Ascending aorta (tissue), 2 donors: ENCODE measurements at regions of chr13 and their contacts with region 1.

Region 1: DNA sequence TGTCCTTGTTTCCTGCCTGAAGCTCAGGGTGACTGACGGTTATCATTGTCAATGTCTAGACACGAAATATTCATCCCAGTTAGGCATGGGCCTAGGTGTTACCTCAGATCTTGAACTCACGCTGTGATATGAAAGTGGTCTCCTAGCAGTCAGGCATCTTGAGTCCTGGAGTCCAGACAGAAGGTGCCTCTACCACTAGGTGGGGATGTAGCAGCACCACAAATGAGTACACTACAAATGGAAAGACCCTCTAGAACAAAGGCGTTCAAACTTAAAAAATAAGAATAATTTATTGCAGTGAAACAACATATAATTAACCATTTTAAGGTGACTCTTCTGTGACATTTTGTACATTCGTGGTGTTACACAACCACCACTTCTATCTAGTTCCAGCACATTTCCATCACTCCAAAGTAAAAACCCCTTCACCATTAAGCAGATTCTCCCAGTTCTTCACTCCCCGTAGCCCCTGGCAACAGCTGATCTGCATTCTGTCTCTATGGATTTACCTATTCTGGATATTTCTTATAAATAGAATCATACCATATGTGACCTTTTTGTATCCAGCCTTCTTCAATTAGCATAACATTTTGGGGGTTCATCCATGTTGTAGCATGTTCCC is 11.9 kb upstream of the FRY start:
- DNase-seq: no peak
- H3K4me3 ChIP-seq: no peak overlapping the region
- H3K27ac ChIP-seq: no peak overlapping the region
- H3K4me1 ChIP-seq: no peaks in the 10 kb centered on the region
- H3K27me3 ChIP-seq: no peaks in the 10 kb centered on the region
- CTCF ChIP-seq: peak; percentile 58 to 80 (median 60)

Region 2: DNA sequence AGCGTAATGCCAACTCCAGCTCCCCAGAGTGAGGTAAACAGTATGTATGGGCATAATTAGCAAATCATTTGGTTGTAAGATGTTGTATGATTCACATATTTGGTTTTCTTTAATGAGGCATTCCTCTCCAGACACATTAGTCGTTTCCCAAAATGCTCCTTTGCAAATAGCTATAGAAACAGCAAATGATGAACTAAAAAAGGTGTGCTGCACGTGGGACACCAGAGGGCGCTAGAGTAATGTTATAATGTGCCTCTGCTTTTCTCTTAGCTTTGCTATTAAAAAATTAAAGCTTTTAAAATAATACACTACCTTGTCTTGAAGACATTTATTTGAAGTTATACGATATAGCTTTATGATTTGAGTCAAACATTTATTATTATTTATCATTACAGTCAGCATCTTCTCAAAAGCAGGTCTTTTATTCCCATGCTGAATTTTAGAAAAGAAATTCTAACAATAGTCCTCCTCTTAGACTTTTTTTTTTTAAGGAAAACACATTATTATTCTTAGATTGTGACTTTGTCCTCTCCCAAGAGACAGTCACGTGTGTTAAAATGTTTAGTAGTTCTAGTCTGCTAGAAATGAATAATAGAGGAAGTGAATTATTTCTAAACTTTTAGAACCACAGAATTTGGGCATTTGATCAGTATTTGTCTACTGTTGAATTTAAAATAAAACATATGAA is 109.7 kb before region 1 on chr13:
- intact Hi-C with region 1: loop called (anchors 5 kb)
- DNase-seq: no peak
- H3K4me3 ChIP-seq: no peak overlapping the region
- H3K27ac ChIP-seq: no peak overlapping the region
- H3K4me1 ChIP-seq: peaks cover 0 to 6% of the 10 kb centered on the region in 2 donors
- H3K27me3 ChIP-seq: no peaks in the 10 kb centered on the region
- CTCF ChIP-seq: peak; percentile 66 to 85 (median 81)

Region 3: DNA sequence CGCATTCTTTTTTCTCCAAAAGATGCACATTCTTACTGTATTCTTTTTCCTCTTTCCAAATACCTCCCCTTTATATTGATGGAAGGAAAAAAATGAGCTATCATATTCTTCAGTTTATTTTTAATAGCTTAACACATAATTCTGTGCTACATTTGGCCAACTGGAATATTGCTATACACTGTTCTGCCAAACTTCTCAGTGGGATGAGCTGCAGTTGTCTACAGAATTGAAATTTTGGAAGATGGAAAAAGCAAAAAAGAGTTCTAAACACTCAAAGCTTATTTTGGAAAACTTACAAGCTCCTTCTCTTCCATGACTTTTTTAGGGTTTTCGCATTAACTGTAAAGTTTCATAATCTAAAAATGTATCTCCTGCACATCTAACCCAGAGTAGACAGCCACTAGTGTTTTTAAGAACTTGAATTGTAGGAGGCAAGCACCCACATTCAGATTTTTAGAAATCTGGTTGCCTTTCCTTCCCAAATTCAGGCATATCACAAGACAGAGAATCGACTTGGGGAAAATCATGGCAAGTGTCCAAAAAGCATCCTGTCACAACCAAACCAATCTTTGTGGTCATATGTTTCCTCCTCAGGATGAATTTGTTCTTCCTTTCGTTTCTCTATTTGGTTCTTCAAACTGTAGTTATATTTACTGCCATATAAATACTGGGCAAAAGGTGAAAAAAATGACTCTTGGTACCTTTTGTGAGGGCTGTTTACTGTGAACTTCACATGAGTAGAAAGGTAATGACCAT is 99.6 kb before region 1 on chr13:
- intact Hi-C with region 1: no loop called
- DNase-seq: no peak
- H3K4me3 ChIP-seq: no peak overlapping the region
- H3K27ac ChIP-seq: no peak overlapping the region
- H3K4me1 ChIP-seq: no peaks in the 10 kb centered on the region
- H3K27me3 ChIP-seq: no peaks in the 10 kb centered on the region
- CTCF ChIP-seq: no peak

Region 4: DNA sequence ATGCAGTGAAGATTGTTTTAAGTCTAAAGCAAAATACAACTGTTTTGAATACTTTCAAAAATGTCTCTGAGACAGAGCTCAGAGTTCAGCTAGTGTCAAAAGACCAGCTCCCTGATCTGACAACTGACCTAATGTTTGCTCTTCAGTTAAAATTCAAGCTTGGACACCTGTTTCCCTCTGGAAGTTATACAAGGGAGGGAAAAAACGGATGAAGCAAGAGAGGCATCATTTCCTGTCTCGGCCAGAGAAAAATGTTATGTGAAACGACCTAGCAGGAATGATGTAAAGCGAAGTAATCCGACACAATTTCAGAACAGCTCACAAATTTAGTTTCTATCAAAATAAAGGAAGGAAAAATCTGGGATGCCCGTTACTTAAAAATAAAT is 236.0 kb after region 1 on chr13:
- intact Hi-C with region 1: loop called (anchors 5 kb)
- DNase-seq: no peak
- H3K4me3 ChIP-seq: peak overlapping the region; percentile 24 to 68
- H3K27ac ChIP-seq: peak overlapping the region; percentile 79 to 82
- H3K4me1 ChIP-seq: peaks cover 0 to 3% of the 10 kb centered on the region in 2 donors
- H3K27me3 ChIP-seq: no peaks in the 10 kb centered on the region
- CTCF ChIP-seq: no peak